Lower leg skin (tissue), 4 donors: ENCODE measurements at regions of chr17 and their contacts with region 1.

Region 1: DNA sequence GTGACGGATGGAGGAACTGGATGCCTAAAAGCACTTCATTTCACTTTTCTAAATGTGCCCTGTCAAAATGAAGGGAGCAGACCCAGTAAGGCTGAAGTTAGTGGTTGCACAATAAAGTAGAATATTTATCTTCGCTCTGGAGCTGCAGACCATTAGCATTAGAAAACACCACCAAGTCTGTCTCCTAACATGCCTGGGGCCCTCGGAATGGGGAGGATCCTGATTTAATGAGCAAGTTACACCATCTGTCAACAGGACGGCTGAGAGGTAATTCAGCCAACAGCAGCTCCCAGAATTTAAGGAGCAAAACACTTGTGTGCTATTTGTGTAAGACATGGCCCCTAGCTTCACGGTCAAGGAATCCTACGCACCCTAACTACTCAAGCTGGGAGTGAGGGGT is 22.3 kb downstream of the CA10 start:
- DNase-seq: peak in 1 of 2 donors; percentile 43
- H3K4me3 ChIP-seq: no peak overlapping the region
- CTCF ChIP-seq: no peak
- POLR2A ChIP-seq: no peak

Region 2: GRCh38 chr17:52011070-52011469 is 125.1 kb before region 1 on chr17:
- intact Hi-C with region 1: no loop called
- DNase-seq: no peak
- H3K4me3 ChIP-seq: no peak overlapping the region
- CTCF ChIP-seq: no peak
- POLR2A ChIP-seq: no peak

Region 3: DNA sequence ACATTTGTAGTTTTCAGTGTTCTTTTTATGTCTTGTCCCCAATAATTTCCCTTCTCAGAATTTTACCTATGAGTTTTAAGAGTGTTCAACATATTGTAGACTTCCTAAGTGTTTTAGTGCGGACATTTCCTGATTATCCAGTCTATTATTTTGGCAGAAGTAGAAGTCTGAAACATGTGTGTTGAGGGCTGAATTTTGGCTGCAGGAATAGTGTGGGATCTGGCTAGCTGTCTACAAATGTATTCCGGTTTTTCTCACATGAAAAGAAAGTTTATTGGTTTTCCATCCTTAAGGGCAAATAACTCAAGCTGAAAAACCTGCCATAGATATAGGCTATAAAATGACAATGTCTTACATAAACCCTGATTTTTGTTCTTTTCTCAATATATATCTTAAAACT is 55.3 kb after region 1 on chr17:
- intact Hi-C with region 1: loop called (anchors 10 kb)
- DNase-seq: no peak
- H3K4me3 ChIP-seq: no peak overlapping the region
- CTCF ChIP-seq: no peak
- POLR2A ChIP-seq: no peak